ENCODE measurements at regions of chr1 and their contacts with region 1.

Region 1: DNA sequence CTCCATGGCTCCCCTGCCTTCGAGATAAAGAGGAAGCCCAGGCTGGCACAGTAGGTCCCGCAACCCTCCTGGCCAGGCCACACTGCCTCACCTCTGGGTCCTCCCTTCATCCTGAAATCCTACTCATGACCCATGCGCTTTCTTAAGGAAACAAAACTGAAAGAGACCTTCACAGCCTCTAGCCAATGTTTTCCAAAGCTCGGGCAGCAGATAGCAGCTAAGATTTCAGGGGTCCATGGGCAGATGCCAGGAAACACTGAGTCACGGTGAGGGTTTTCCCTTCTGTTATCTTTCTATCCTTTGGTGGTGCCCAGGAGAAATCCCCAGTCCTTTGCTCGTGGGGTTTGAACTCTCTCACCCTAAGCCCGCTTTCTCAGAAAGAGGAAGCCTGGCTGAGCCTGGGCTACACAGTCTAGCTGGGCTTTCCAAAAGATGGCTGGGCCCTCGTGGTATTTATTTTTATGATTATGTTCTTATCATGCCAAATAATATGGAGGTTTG is 26.6 kb downstream of the TTC39A start:
- DNase-seq: no peak
- H3K4me3 ChIP-seq: no peak overlapping the region
- H3K27ac ChIP-seq: no peak overlapping the region
- H3K4me1 ChIP-seq: peaks cover 0 to 14% (median 12%) of the 10 kb centered on the region in 3 donors
- H3K27me3 ChIP-seq: no peaks in the 10 kb centered on the region
- CTCF ChIP-seq: no peak

Region 2: GRCh38 chr1:51264451-51264850 is 39.4 kb before region 1 on chr1:
- intact Hi-C with region 1: no loop called
- DNase-seq: peak in 2 of 5 donors; percentile 5 to 12
- H3K4me3 ChIP-seq: no peak overlapping the region
- H3K27ac ChIP-seq: no peak overlapping the region
- H3K4me1 ChIP-seq: peaks cover 0 to 8% (median 3%) of the 10 kb centered on the region in 3 donors
- H3K27me3 ChIP-seq: no peaks in the 10 kb centered on the region
- CTCF ChIP-seq: no peak

Region 3: DNA sequence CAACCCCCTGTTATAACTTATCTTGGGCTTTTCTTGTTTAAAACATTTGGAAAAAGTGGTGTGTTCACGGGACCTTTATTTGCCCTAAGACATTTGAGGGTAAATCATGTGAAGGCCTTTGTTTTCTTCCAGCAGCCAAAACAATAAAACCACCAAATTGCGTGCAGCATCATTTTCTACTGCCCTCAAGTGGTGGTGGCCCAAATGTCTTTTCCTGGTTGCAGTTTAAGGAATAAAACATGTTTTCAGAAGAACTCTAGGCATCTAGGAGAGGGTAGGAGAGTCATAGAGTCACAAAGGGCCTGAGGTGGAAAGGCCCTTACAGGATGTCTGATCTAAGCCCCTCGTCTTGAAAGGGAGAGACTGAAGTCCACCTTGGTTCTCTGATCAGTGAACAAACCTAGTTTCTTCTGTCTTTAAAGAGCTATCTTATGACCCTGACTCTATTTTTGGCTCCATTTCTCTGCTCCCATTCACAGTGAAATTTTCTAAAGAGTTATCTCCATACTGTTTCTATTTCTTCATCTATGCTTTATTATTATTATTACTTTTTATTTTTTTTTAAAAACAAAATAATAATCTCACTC is 231.3 kb after region 1 on chr1:
- intact Hi-C with region 1: loop called (anchors 10 kb)
- DNase-seq: peak in 3 of 5 donors; percentile 53 to 79 (median 66)
- H3K4me3 ChIP-seq: no peak overlapping the region
- H3K27ac ChIP-seq: no peak overlapping the region
- H3K4me1 ChIP-seq: no peaks in the 10 kb centered on the region
- H3K27me3 ChIP-seq: no peaks in the 10 kb centered on the region
- CTCF ChIP-seq: peak; percentile 68